ENCODE measurements at regions of chr7 and their contacts with region 1.

Region 1: DNA sequence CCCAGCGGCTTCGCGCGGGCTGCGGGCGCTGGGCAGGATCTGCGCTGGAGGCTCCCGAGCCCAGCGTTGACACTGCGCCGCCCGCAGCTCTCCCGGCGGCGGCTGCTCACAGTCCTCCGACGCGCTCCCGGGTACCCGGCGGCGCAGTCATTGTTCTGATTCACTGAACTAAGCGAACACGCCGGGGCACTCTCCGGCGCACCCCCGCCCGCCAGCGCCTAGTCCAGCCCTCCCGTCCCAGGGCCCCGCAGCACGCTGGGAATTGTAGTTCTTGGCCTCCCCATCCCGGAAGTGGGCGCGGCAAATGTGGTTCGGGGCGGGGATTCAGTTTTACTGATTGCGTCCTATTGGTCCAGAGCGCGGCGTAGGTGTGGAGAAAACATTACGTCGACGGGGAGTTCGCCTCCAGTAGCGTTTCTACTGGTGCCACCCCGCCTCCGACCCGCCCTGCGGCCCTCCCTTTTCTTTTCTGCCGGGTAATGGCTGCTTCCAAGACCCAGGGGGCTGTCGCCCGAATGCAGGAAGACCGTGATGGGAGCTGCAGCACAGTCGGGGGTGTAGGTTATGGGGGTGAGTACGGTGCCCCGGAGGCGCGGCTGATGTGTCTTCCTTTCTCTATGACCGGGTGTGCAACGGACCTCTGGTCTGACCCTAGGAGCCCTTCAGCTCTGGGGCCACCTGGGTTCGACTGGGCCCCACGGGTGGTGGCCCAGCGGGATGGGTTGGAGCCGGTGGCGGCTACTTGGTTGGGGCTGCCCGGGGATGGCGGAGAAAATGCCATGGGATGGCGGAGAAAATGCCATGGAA is at the starts of genes DOCK4 and ZNF277:
- DNase-seq: peak; percentile 98 to 100 (median 99)
- H3K4me3 ChIP-seq: peak within 1 kb of the TSS; percentile 95 to 100
- H3K4me3 Mint-ChIP-seq: peak within 1 kb of the TSS; percentile 92 to 98 (median 96)
- H3K27ac ChIP-seq: peak within 1 kb of the TSS; percentile 71
- H3K27ac Mint-ChIP-seq: peak within 1 kb of the TSS; percentile 93 to 96 (median 94)
- H3K4me1 ChIP-seq: peaks cover 30% of the 10 kb centered on the region
- H3K4me1 Mint-ChIP-seq: peaks cover 30 to 50% (median 36%) of the 10 kb centered on the region in 4 donors
- H3K27me3 ChIP-seq: peaks cover 26% of the 10 kb centered on the region
- H3K27me3 Mint-ChIP-seq: peaks cover 17 to 21% of the 10 kb centered on the region in 2 donors
- total RNA-seq, gene DOCK4: 1.2 to 1.5 TPM
- total RNA-seq, gene ZNF277: 31.0 to 31.4 TPM

Region 2: DNA sequence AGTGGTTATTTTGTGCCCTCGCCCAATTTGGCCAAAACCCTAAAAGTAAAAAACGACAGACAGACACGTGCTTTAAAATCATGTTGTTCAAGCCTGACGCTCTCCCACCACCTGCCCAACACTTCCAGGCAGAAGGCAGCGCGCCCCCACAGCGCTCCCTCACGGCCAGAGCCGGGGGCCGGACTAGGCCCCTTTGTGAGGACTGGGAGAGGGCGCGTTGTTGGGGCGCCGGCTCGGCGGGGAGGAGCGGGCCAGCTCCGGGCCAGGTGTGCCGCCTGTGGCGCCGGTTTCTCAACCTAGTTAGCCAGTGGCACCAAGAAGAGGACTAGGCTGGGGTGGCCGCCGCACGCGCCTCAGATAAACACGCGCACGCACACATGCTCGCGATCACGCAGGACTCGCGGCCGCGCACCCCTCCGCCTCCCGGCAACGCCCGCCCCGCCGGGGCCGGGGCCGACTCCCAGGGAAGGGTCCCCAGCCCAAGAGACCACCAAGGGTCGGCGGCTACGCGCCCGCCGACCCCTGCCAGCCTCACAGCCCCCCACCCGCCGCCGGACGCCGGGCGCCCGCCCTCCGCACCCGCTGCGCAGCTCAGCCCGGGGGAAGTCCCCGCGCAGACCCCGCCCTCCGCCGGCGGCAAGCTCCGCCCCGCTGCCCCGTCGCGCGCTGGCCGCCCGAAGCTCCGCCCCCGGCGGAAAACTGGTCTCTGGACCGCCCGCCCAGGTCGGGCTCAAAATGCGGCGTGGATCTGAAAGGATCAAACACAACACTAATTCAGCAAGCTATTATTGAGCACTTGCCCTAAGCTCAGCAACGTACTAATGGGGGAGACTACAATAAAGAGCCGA is 644.3 kb before region 1 on chr7 and contains the start of gene IMMP2L:
- CTCF ChIA-PET with region 1: no interaction called
- POLR2A ChIA-PET with region 1: interaction called, 10 read pairs
- intact Hi-C with region 1: loop called (anchors 5 kb)
- DNase-seq: peak; percentile 82 to 95 (median 91)
- H3K4me3 ChIP-seq: peak within 1 kb of the TSS; percentile 73 to 74
- H3K4me3 Mint-ChIP-seq: peak within 1 kb of the TSS; percentile 90 to 94 (median 92)
- H3K27ac ChIP-seq: peak within 1 kb of the TSS; percentile 76
- H3K27ac Mint-ChIP-seq: peak within 1 kb of the TSS; percentile 88 to 98 (median 95)
- H3K4me1 ChIP-seq: peaks cover 32% of the 10 kb centered on the region
- H3K4me1 Mint-ChIP-seq: peaks cover 27 to 47% (median 36%) of the 10 kb centered on the region in 4 donors
- H3K27me3 ChIP-seq: no peaks in the 10 kb centered on the region
- H3K27me3 Mint-ChIP-seq: peaks cover 3 to 5% of the 10 kb centered on the region in 2 donors
- total RNA-seq, gene IMMP2L: 29.2 to 32.2 TPM

Region 3: DNA sequence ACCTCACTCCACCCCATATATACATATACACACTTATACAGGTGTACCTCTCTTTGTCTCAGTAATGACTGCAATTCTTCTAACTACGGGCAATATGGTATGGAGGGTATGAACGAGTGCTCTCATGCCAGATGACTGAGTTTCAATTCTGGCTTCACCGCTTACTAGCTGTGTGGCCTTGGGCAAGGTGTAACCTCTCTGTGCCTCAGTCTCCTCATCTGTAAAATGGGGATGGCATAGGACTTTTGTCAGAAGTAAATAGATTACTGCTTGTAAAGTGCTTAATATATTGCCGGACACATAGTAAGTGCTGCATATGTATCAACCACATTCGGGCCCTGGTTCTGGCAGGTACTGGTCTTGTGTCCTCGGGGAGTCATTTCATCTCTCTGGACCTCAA is 183.7 kb after region 1 on chr7:
- CTCF ChIA-PET with region 1: no interaction called
- POLR2A ChIA-PET with region 1: no interaction called
- intact Hi-C with region 1: loop called (anchors 2 kb)
- DNase-seq: no peak
- H3K4me3 ChIP-seq: no peak overlapping the region
- H3K4me3 Mint-ChIP-seq: peak overlapping the region in 4 of 8 donors; percentile 25 to 89 (median 82)
- H3K27ac ChIP-seq: no peak overlapping the region
- H3K27ac Mint-ChIP-seq: peak overlapping the region in 1 of 7 donors; percentile 39
- H3K4me1 ChIP-seq: peaks cover 7% of the 10 kb centered on the region
- H3K4me1 Mint-ChIP-seq: peaks cover 8 to 25% (median 17%) of the 10 kb centered on the region in 4 donors
- H3K27me3 ChIP-seq: no peaks in the 10 kb centered on the region
- H3K27me3 Mint-ChIP-seq: peaks cover 0 to 5% of the 10 kb centered on the region in 2 donors

Region 4: GRCh38 chr7:112789817-112790585 is 583.6 kb after region 1 on chr7 and contains the start of gene TMEM168:
- CTCF ChIA-PET with region 1: no interaction called
- POLR2A ChIA-PET with region 1: no interaction called
- intact Hi-C with region 1: loop called (anchors 1 kb)
- DNase-seq: peak; percentile 83 to 90 (median 85)
- H3K4me3 ChIP-seq: peak within 1 kb of the TSS; percentile 59 to 93
- H3K4me3 Mint-ChIP-seq: peak within 1 kb of the TSS; percentile 91 to 96 (median 94)
- H3K27ac ChIP-seq: peak within 1 kb of the TSS; percentile 76
- H3K27ac Mint-ChIP-seq: peak within 1 kb of the TSS; percentile 82 to 95 (median 92)
- H3K4me1 ChIP-seq: peaks cover 16% of the 10 kb centered on the region
- H3K4me1 Mint-ChIP-seq: peaks cover 27 to 58% (median 38%) of the 10 kb centered on the region in 4 donors
- H3K27me3 ChIP-seq: no peaks in the 10 kb centered on the region
- H3K27me3 Mint-ChIP-seq: no peaks in the 10 kb centered on the region
- total RNA-seq, gene TMEM168: 25.9 to 31.9 TPM

Region 5: DNA sequence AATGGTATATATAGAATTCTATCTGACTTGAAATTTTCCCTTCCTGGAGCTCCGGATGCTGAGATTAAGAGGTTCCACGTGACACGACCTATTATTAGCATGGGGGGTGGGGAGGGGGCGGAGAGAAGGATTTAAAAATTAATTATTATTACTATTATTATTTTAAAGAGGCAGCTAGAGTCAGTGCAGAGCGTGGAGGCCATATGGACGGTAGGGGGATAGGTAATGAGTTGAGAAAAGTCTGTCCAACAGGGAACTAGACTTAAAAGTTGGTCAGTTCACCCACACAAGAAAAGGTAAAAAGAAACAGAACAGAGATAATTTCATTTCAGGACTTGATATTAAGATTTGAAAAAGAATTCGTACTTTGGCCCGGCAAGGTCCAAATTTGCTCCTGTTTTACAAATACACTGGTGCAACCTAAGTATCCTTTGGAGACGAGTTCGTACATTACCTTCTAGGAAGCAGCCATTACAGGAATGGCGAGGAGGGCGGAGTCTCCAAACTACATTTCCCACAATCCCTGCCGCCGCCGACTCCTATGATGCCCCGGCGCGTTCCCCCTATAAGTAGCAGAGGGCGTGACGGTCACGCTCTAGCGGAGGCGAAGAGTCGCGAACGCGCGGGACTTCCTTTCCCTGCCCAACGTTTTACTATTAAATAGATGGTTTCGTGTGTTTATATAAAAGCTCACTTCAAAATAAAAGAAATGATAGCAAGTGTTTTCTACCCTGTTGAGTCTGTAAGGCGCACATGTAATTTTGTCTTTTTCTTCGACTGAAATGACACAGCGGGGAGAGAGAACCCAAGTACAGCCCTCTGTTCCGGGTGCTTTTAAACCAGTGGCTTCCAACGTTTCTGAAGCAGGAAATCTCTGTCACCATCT is 911.9 kb after region 1 on chr7 and contains the start of gene SMIM30:
- CTCF ChIA-PET with region 1: no interaction called
- POLR2A ChIA-PET with region 1: interaction called, 4 read pairs
- intact Hi-C with region 1: loop called (anchors 1 kb)
- DNase-seq: peak; percentile 85 to 89 (median 87)
- H3K4me3 ChIP-seq: peak within 1 kb of the TSS; percentile 65 to 70
- H3K4me3 Mint-ChIP-seq: peak within 1 kb of the TSS; percentile 94 to 99 (median 96)
- H3K27ac ChIP-seq: peak within 1 kb of the TSS; percentile 70
- H3K27ac Mint-ChIP-seq: peak within 1 kb of the TSS; percentile 84 to 99 (median 98)
- H3K4me1 ChIP-seq: peaks cover 13% of the 10 kb centered on the region
- H3K4me1 Mint-ChIP-seq: peaks cover 11 to 24% (median 14%) of the 10 kb centered on the region in 4 donors
- H3K27me3 ChIP-seq: no peaks in the 10 kb centered on the region
- H3K27me3 Mint-ChIP-seq: no peaks in the 10 kb centered on the region
- total RNA-seq, gene SMIM30: 21.6 to 21.8 TPM

Measured in CD4-positive, alpha-beta memory T cell (primary cell).